Psoas muscle (tissue), 8 donors: ENCODE measurements at regions of chr15 and their contacts with region 1.

Region 1: DNA sequence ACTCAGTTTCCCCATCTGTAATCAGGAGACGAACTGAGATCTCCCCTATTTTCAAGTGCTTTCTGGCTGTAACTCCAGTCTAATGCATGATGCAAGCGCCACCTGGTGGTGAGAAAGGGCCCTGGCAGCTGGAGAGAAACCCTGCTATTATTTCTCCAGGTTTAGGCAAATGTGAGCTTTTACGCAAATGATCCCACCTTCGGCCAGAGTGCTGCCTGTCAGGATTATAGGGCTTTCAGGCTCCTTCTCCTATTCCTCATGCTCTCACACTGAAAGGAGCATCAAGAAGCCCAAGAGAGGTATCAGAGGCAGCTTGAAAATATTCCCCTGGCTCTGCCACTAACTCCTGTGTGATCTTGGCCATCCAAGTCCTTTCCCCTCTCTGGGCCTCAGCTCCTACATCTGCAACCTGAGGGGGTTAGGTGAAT is 93.9 kb upstream of the RASGRF1 start:
- DNase-seq: peak; percentile 70 to 81
- ATAC-seq: peak; percentile 63 to 78 (median 66)
- H3K4me3 ChIP-seq: no peak overlapping the region
- H3K27ac ChIP-seq: no peak overlapping the region
- H3K4me1 ChIP-seq: no peaks in the 10 kb centered on the region
- H3K27me3 ChIP-seq: no peaks in the 10 kb centered on the region
- CTCF ChIP-seq: peak; percentile 99

Region 2: DNA sequence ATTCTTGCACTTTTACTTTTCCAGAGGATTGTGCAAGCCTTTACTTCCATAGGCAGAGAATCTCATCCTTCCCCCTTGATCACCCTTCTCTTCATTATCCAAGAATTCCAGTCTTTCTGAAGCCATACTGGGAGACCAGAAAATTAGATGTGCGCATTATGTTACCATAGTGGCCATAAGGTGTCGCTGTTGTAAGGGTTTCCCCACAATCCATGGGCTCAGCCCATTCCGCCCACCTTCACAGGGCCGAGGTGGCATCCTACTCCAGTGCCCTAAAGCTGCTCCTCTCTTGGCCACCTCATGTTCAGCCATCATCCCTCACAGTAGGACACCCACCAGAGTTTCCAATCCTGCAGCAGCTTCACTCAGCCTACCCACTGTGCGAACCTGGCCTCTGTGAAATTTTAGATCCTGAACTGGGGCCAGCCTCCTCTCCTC is 274.7 kb before region 1 on chr15:
- intact Hi-C with region 1: loop called (anchors 2 to 10 kb)
- DNase-seq: no peak
- ATAC-seq: peak; percentile 30 to 54 (median 50)
- H3K4me3 ChIP-seq: no peak overlapping the region
- H3K27ac ChIP-seq: no peak overlapping the region
- H3K4me1 ChIP-seq: peaks cover 14% of the 10 kb centered on the region
- H3K27me3 ChIP-seq: no peaks in the 10 kb centered on the region
- CTCF ChIP-seq: peak; percentile 58

Region 3: GRCh38 chr15:79028411-79028964 is 156.0 kb before region 1 on chr15:
- intact Hi-C with region 1: loop called (anchors 1 to 2 kb)
- DNase-seq: no peak
- ATAC-seq: peak in 1 of 4 donors; percentile 50
- H3K4me3 ChIP-seq: no peak overlapping the region
- H3K27ac ChIP-seq: no peak overlapping the region
- H3K4me1 ChIP-seq: no peaks in the 10 kb centered on the region
- H3K27me3 ChIP-seq: peaks cover 0 to 4% (median 1%) of the 10 kb centered on the region in 3 donors
- CTCF ChIP-seq: peak; percentile 70